ENCODE measurements at regions of chr10 and their contacts with region 1.

Region 1: DNA sequence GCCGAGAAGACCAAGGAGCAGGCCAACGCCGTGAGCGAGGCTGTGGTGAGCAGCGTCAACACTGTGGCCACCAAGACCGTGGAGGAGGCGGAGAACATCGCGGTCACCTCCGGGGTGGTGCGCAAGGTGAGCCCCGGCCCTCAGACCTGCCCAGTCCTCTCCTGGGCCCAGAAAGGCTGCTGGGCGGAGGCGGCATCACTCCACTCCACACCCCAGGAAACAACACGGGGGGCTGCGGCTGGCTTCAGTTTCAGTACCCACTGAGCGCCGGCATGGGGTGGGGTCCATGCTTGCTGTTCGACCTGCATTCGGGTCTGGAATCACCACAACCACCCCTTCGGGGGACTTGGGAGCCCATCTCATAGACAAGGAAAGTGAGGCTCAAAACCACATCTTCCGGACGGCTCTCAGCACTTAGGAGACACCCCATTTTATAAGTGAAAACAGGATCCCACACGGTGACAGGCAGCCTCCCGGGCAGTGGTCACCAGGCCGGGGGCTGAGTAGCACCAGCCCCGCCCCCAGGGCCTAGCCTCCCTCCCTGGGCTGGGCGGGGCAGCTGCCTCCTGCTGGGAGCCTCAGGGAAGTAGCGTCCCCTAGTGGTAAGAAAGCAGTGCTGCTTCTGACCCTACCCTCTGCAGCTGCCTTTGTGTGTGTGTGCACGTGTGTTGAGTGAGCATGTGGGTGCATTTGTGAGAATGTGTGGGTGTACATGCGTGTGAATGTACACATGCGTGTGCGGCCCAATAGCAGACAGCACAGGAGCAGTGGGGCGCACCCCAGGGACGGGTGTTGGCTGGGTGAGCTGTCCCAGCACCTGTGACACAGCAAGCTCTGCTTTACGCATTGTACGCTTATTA is 1.8 kb downstream of the SNCG start:
- DNase-seq: peak; percentile 85 to 92 (median 87)
- ATAC-seq: peak; percentile 80
- H3K4me3 ChIP-seq: peak overlapping the region; percentile 49
- H3K27ac ChIP-seq: peak overlapping the region; percentile 91
- H3K4me1 ChIP-seq: peaks cover 53 to 84% of the 10 kb centered on the region in 2 experiments
- H3K27me3 ChIP-seq: no peaks in the 10 kb centered on the region
- CTCF ChIP-seq: peak; percentile 97 to 98 (median 97)
- EP300 ChIP-seq: 0 out of 2 replicates have a peak, but pooled peaks have one; percentile 5
- POLR2A ChIP-seq: peak; percentile 44; the same call in 1 of the 2 replicates
- RAD21 ChIP-seq: peak; percentile 87 to 97

Region 2: DNA sequence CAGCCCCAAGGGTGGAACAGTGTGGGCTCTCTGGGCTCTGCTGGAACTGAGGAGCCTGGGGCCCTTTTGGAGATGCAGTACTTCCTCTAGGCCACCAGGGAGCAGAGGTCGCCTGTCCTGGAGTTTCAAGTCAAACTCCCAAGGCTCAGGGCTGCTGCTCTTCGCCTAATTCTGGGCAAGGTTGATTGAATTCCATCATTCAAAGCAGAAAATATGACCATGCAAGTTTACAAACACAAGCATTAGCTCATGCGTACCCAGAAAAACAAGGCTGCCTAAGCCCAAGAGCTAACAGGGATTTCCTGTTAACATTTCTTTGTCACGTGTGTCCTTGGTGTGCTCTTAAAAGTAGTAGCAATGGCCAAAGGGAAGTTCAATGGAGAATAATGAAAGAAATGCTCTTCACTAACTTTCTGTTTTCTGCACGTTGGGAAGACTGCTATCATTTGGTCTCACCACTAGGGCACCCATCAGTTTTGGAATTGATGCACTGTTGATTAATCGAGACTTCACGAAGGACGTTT is 271.8 kb before region 1 on chr10:
- CTCF ChIA-PET with region 1: interaction called, 4 read pairs
- POLR2A ChIA-PET with region 1: no interaction called
- in situ Hi-C with region 1: no loop called
- intact Hi-C with region 1: loop called (anchors 1 kb)
- DNase-seq: peak; percentile 67 to 71 (median 68)
- ATAC-seq: peak; percentile 87
- H3K4me3 ChIP-seq: no peak overlapping the region
- H3K27ac ChIP-seq: no peak overlapping the region
- H3K4me1 ChIP-seq: peaks cover 0 to 17% of the 10 kb centered on the region in 2 experiments; a peak in 2 of 5 replicates
- H3K27me3 ChIP-seq: peaks cover 7 to 29% of the 10 kb centered on the region in 2 experiments; a peak in 4 of 5 replicates
- CTCF ChIP-seq: peak; percentile 78 to 83 (median 83)
- EP300 ChIP-seq: no peak
- POLR2A ChIP-seq: no peak
- RAD21 ChIP-seq: peak; percentile 72 to 80

Region 3: GRCh38 chr10:86804805-86805204 is 155.4 kb before region 1 on chr10:
- CTCF ChIA-PET with region 1: no interaction called
- POLR2A ChIA-PET with region 1: no interaction called
- in situ Hi-C with region 1: no loop called
- intact Hi-C with region 1: no loop called
- DNase-seq: no peak
- ATAC-seq: no peak
- H3K4me3 ChIP-seq: no peak overlapping the region
- H3K27ac ChIP-seq: no peak overlapping the region
- H3K4me1 ChIP-seq: no peaks in the 10 kb centered on the region
- H3K27me3 ChIP-seq: no peaks in the 10 kb centered on the region
- CTCF ChIP-seq: no peak
- EP300 ChIP-seq: no peak
- POLR2A ChIP-seq: no peak
- RAD21 ChIP-seq: no peak

Measured in K562 (cell line).